Heart right ventricle (tissue), 16 donors: ENCODE measurements at regions of chr20 and their contacts with region 1.

Region 1: DNA sequence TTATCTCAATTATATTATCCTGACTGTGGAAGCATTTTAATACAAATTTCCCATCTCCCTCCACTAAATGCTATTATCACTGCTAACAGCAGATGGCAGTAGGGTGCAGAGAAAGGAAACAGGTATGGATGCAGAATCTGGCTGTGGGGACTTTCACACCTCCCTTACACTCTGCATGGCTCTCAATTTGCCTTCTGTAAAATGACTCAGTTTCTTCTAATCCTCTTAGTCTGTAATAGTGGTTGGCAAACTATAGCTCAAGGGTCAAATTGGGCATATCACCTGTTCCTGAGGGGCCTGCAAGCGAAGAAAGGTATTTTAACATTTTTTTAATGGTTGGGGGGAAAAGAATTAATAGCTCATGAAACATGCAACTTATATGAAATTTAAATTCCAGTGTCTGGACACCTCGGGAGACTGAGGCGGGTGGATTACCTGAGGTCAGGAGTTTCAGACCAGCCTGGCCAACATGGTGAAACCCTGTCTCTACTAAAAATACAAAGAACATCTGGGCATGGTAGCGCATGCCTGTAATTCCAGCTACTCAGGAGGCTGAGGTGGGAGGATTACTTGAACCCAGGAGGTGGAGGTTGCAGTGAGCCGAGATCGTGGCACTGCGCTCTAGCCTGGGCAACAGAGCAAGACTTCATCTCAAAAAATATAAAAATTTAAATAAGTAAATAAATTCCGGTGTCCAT is 83.5 kb downstream of the ZMYND8 start:
- DNase-seq: peak in 1 of 2 donors; percentile 77
- ATAC-seq: peak; percentile 39 to 84 (median 69)
- H3K4me3 ChIP-seq: no peak overlapping the region
- H3K27ac ChIP-seq: peak overlapping the region in 9 of 10 donors; percentile 42 to 89 (median 67)
- H3K4me1 ChIP-seq: peaks cover 10 to 53% (median 51%) of the 10 kb centered on the region in 9 donors
- H3K27me3 ChIP-seq: no peaks in the 10 kb centered on the region
- CTCF ChIP-seq: peak; percentile 76 to 92 (median 88)

Region 2: DNA sequence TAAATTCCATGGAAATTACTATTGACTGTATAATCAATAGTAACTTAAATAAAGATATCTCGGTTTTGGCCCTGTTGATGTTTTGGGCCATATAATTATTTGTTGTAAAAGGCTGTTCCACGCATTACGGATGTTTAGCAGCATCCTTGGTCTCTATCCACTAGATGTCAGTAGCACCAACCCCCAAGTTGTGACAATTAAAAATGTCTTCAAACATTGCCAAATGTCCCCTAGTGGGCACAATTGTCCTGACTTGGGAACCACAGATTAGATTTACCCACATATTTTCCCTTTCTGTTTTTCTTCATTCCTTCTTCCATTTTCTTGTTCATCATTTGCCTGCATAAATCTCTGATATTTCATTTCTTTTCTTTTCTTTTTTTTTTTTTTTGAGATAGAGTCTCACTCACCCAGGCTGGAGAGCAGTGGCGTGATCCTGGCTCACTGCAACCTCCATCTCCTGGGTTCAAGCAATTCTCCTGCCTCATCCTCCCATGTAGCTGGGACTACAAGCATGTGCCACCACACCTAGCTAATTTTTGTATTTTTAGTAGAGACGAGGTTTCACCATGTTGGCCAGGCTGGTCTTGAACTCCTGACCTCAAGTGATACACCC is 1680.4 kb before region 1 on chr20:
- intact Hi-C with region 1: no loop called
- DNase-seq: no peak
- ATAC-seq: no peak
- H3K4me3 ChIP-seq: no peak overlapping the region
- H3K27ac ChIP-seq: no peak overlapping the region
- H3K4me1 ChIP-seq: no peaks in the 10 kb centered on the region
- H3K27me3 ChIP-seq: peaks cover 0 to 31% (median 22%) of the 10 kb centered on the region in 7 donors
- CTCF ChIP-seq: peak in 7 of 9 donors; percentile 33 to 64 (median 37)

Region 3: DNA sequence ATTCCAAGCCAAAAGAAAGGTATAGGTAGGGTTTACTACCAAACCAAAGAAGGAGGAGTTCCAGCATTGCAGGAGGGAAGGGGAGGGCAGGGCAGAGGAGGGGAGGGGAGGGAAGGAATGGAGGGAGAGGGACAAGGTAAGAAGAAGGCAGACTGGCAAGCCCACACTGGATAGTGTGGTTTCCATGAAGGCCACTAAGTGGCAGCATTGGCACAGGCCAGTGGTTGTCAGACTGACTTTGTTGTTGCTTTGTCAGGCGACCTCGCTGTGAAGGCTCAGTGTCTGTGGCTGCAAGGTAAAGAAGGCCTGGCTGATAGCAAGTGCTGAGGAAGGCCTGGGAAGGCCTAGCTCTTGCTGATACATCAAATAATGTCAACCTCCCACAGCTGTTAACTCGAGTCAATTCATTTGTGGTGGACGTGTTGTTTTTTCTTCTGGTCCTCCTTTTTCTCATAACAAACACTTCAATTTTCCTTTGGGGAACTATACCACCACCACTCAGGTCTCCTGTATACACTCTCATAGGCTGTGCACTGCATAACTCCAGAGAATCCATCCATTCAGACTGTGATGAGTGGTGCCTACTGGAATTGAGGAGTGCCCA is 752.0 kb before region 1 on chr20:
- intact Hi-C with region 1: no loop called
- DNase-seq: peak in 1 of 2 donors; percentile 4
- ATAC-seq: peak in 3 of 8 donors; percentile 55 to 68 (median 58)
- H3K4me3 ChIP-seq: no peak overlapping the region
- H3K27ac ChIP-seq: no peak overlapping the region
- H3K4me1 ChIP-seq: no peaks in the 10 kb centered on the region
- H3K27me3 ChIP-seq: peaks cover 0 to 32% (median 26%) of the 10 kb centered on the region in 7 donors
- CTCF ChIP-seq: peak in 8 of 9 donors; percentile 28 to 67 (median 58)

Region 4: DNA sequence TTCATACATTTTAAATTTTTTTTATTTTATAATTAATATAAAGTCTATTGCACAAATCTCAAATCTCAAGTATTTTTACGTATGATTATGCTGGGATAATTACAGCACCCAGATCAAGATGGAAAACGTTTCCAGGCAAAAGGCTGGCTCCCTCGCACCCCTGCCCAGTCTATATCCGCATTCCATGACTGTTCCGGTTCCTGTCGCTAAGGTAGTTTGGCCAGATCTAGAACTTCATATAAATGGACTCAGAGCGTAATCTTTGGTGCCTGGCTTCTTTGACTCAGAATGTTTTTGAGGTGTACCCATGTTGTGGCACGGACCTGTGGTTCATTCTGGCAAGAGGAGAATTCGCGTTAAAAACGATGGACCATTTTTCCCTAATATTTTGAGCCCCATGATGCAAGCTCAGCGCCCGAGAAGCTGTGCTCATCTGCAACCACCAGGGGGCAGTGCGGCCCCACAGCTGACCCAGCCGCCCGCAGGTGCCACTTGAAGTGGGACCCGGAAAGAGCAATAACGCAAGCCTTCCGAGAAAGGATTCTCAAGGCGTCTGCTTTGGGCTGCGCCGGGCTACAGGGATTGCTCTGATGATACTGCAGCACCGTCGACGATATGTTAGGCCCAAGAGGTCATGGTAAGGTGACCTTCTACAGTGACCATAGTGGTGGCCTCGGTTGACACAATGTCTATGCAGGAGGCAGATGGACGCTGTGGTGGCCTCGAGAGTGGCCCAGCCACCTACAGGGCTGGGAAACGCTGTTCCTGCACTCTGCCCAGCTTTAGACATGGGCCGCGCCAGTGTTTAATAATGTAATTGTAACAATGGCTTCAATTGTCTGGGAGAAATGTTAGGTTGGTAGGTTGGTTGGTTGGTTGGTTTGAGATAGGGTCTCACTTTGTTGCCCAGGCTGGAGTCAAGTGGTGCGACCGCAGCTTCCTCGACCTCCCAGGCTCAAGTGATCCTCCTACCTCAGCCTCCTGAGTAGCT is 76.7 kb before region 1 on chr20:
- intact Hi-C with region 1: loop called in 5 of 10 experiments (anchors 2 to 5 kb)
- DNase-seq: peak; percentile 66 to 73
- ATAC-seq: peak; percentile 63 to 89 (median 82)
- H3K4me3 ChIP-seq: peak overlapping the region in 1 of 10 donors; percentile 15
- H3K27ac ChIP-seq: no peak overlapping the region
- H3K4me1 ChIP-seq: peaks cover 0 to 16% (median 12%) of the 10 kb centered on the region in 9 donors
- H3K27me3 ChIP-seq: no peaks in the 10 kb centered on the region
- CTCF ChIP-seq: peak; percentile 92 to 98 (median 94)

Region 5: DNA sequence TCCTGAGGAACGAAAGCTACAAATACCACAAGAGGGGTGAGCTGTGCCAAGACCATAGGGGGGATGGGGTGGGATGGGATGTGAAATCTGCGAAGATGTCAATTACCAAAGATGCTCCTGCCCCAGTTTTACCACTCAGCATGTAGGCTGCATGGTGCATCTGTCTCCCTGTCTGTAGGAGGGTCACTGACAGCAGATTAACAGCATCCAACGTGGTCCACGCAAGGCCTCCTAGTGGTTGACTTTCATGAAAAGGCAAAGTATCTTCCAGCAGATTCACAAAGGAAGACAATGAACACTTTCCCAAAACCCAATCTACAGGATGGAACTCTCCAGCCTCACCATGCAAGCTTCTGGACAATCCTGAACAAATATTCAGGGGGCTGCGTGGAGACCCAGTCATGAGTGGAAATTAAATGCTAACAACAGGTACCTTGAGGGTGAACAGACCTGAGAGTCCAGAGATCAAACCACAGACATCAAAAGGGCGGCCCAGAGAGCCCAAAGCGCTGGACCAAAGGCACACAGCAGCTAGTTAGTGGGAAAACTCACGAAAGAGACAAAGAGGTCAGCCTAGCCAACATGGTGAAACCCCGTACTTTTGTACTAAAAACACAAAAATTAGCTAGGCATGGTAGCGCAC is 39.1 kb after region 1 on chr20:
- intact Hi-C with region 1: loop called in 3 of 10 experiments (anchors 5 kb)
- DNase-seq: no peak
- ATAC-seq: no peak
- H3K4me3 ChIP-seq: no peak overlapping the region
- H3K27ac ChIP-seq: peak overlapping the region in 8 of 10 donors; percentile 28 to 99 (median 53)
- H3K4me1 ChIP-seq: peaks cover 11 to 82% (median 44%) of the 10 kb centered on the region in 9 donors
- H3K27me3 ChIP-seq: no peaks in the 10 kb centered on the region
- CTCF ChIP-seq: no peak

Region 6: DNA sequence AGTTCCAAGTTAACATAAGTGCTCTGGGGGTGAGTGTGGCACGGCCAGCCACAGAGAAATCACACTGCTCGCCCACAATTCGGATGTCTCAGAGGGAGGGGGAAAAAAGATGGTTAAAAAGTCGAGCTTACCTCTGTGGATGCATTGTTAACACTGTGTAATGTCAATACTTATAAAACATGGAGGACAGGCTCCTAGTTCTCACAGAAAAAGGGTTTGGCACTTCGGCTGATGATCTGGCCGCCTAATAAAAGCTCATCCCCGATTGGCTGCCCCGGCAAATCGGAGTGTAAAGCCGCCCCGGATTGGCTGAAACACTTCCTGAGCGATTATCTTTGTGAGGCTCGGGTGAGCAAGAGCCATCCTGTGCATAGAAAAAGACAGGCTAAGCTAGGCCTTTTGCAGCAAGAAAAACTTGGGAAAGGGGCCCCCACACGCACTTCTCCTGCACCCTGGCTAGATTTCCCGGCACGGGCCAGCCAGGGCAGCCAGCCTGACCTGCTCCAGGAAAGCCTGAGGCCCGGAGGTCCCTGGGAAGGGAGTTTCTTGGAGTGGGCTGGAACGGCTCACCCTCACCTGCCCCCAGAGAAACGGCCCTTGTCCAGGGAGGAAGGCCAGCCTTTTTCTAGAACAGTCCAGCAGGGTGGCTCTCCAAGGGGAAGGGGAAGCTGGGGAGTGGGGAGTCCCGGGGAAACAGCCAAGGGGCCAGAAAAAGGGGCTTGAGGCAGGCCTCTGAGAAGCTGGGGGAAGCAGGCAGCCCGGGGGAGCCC is 83.7 kb after region 1 on chr20 and contains the start of gene ZMYND8:
- intact Hi-C with region 1: loop called in 6 of 10 experiments (anchors 5 kb)
- DNase-seq: peak; percentile 86 to 89
- ATAC-seq: peak; percentile 45 to 73 (median 64)
- H3K4me3 ChIP-seq: peak within 1 kb of the TSS in 6 of 10 donors; percentile 7 to 39 (median 16)
- H3K27ac ChIP-seq: peak within 1 kb of the TSS; percentile 97 to 99 (median 98)
- H3K4me1 ChIP-seq: peaks cover 69 to 100% (median 100%) of the 10 kb centered on the region in 9 donors
- H3K27me3 ChIP-seq: no peaks in the 10 kb centered on the region
- CTCF ChIP-seq: no peak
- total RNA-seq, gene ZMYND8: 22.0 to 39.0 (median 29.0) TPM

Region 7: DNA sequence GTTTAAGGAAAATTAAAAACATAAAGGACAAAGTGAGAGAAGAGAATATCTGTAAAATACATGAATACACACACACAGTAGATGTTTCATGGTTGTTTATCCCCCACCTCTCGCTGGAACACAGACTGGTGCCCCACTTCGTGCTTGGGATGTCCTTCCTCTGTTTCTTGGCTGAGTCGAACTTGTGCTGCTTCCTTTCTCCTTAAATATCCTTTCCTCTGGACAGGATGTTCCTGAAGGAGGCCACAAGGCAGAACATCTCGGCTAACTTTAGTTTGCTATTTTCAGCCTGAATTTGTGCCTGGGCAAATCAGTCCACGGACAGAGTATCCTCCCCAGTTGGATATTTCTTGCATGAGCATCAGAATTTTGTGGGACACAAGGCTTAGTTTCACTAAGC is 138.1 kb after region 1 on chr20:
- intact Hi-C with region 1: no loop called
- DNase-seq: peak in 1 of 2 donors; percentile 27
- ATAC-seq: peak; percentile 30 to 90 (median 76)
- H3K4me3 ChIP-seq: peak overlapping the region in 1 of 10 donors; percentile 6
- H3K27ac ChIP-seq: peak overlapping the region; percentile 36 to 77 (median 61)
- H3K4me1 ChIP-seq: peaks cover 6 to 46% (median 33%) of the 10 kb centered on the region in 9 donors
- H3K27me3 ChIP-seq: no peaks in the 10 kb centered on the region
- CTCF ChIP-seq: no peak

Region 8: DNA sequence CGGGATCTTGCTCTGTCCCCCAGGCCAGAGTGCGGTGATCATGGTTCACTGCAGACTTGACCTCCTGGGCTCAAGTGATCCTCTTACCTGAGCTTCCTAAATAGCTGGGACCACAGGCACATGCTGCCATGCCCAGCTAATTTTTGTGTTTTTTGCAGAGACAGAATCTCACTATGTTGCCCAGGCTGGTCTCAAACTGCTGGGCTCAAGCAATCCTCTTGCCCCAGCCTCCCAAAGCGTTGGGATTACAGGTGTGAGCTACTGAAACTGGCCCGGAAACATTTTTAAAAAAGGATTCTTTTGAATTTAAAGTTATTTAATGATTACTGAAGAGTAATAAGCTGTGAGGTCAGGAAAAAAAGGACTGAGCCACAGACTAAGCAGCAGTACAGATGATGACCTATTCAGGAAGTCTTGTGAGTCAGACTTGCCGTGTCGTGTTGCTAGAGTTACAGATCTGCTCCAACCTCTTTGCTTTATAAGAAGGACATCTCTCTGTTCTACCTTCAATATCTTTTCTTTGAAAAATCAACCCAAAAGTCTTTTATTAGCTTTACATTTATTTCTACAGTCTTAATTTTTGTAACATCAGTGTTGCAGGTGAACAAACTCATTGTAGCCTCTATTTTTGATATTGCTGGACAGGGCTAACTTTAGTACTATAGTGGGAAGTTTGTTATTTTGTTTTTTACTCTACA is 337.4 kb after region 1 on chr20:
- intact Hi-C with region 1: loop called in 1 of 10 experiments (anchors 5 kb)
- DNase-seq: peak in 1 of 2 donors; percentile 61
- ATAC-seq: peak; percentile 55 to 90 (median 80)
- H3K4me3 ChIP-seq: no peak overlapping the region
- H3K27ac ChIP-seq: peak overlapping the region in 4 of 10 donors; percentile 17 to 74 (median 28)
- H3K4me1 ChIP-seq: peaks cover 0 to 85% (median 40%) of the 10 kb centered on the region in 9 donors
- H3K27me3 ChIP-seq: no peaks in the 10 kb centered on the region
- CTCF ChIP-seq: no peak

Region 9: DNA sequence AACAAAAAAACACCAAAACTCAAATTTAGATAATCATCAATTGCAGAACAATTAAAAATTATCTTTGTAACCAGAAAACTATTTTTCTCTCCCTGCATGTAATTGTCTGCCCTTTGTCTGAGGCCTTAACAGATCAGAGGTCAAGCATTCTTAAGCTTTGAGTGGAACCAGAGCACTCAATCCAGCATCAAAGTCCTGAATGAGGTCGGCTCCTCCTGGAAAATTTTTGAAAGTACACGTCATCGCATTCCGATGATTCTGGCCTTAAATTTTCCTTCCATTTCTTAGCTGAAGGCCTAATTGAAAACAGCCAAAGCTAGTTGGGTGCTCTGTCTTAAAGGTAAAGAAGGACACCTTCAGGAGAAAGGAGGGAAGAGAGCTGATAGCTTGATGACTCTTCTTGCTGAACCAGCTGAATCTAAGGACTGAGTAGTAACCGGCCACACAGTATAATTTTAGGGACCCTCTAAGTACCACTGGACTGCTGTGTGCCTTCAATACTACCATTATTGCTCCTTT is 1022.5 kb after region 1 on chr20:
- intact Hi-C with region 1: no loop called
- DNase-seq: peak in 1 of 2 donors; percentile 33
- ATAC-seq: peak in 7 of 8 donors; percentile 67 to 85 (median 82)
- H3K4me3 ChIP-seq: no peak overlapping the region
- H3K27ac ChIP-seq: peak overlapping the region in 5 of 10 donors; percentile 22 to 62 (median 41)
- H3K4me1 ChIP-seq: peaks cover 0 to 33% (median 15%) of the 10 kb centered on the region in 9 donors
- H3K27me3 ChIP-seq: no peaks in the 10 kb centered on the region
- CTCF ChIP-seq: peak in 5 of 9 donors; percentile 20 to 55 (median 32)